Calu3 (cell line): ENCODE measurements at regions of chr3 and their contacts with region 1.

Region 1: GRCh38 chr3:125431912-125432790 is 57.0 kb upstream of the ZNF148 start:
- DNase-seq: no peak
- H3K4me3 Mint-ChIP-seq: no peak overlapping the region
- H3K27ac Mint-ChIP-seq: no peak overlapping the region
- H3K4me1 Mint-ChIP-seq: no peaks in the 10 kb centered on the region
- H3K27me3 Mint-ChIP-seq: no peaks in the 10 kb centered on the region
- CTCF ChIP-seq: no peak

Region 2: GRCh38 chr3:125386811-125387210 is 45.3 kb before region 1 on chr3:
- CTCF ChIA-PET with region 1: interaction called, 3 read pairs
- intact Hi-C with region 1: loop called (anchors 1 kb)
- DNase-seq: no peak
- H3K4me3 Mint-ChIP-seq: no peak overlapping the region
- H3K27ac Mint-ChIP-seq: no peak overlapping the region
- H3K4me1 Mint-ChIP-seq: peaks cover 13% of the 10 kb centered on the region
- H3K27me3 Mint-ChIP-seq: no peaks in the 10 kb centered on the region
- CTCF ChIP-seq: no peak

Region 3: DNA sequence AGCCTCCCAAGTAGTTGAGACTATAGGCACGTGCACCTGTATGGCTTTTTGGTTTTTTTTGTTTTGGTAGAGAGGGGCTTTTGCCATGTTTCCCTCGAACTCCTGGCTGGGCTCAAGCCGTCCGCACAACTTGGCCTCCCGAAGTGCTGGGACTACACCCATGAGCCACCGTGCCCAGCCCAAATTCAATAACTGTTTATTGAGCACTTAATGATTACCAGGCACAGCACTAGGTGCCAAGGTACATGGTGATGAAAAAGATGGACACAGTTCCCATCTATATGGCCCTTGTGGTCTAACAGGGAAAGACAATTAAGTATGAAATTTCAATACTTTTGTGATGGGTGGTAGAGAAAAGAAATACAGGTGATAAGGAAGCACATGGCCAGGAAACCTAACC is 21.2 kb before region 1 on chr3:
- CTCF ChIA-PET with region 1: no interaction called
- intact Hi-C with region 1: no loop called
- DNase-seq: no peak
- H3K4me3 Mint-ChIP-seq: no peak overlapping the region
- H3K27ac Mint-ChIP-seq: no peak overlapping the region
- H3K4me1 Mint-ChIP-seq: no peaks in the 10 kb centered on the region
- H3K27me3 Mint-ChIP-seq: peaks cover 65% of the 10 kb centered on the region
- CTCF ChIP-seq: no peak